Gastrocnemius medialis (tissue), 4 donors: ENCODE measurements at regions of chr11 and their contacts with region 1.

Region 1: DNA sequence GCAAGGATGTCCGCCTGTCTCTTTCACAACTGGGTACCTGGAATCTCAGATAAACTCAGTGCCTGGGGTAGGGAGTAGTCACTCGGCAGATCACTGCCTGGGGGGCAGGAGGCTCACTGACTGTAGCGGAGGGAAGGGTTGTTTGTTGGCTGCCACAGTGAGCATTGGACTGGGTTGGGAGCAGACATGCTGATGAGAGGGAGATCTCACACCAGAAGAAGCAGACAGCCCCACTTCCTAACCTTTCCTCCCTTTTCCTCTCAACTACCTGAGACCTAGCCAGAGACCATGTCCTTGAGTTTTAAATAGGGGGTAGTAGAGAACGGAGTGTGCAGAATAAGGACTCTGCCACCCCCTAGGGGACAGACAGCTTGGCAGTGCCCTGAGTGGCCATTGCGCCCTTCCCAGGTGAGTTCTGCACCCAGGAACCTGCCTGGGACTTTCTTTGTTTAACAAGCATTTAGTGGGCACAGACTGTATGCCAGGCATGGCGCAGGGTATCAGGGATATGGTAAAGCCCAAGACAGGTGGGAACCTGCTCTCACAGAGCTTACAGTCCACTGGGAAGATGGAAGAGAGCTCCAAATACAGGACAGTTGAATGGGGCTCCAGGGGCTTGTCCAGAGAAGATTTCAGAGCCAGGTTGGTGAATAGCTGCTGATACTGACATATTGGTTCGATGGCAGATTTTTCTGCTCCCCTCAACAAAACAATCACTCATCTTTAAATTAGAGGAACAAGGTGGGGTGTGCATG is 115.7 kb upstream of the NNMT start:
- DNase-seq: peak in 1 of 2 donors; percentile 81
- ATAC-seq: peak; percentile 2 to 18
- H3K4me3 ChIP-seq: peak overlapping the region; percentile 49 to 64 (median 57)
- H3K27ac ChIP-seq: peak overlapping the region; percentile 94 to 99 (median 96)
- H3K4me1 ChIP-seq: peaks cover 86 to 90% of the 10 kb centered on the region in 2 donors
- H3K27me3 ChIP-seq: no peaks in the 10 kb centered on the region
- CTCF ChIP-seq: peak in 4 of 5 experiments; percentile 48 to 70 (median 63)
- POLR2A ChIP-seq: no peak

Region 2: GRCh38 chr11:114066046-114066648 is 114.3 kb before region 1 on chr11:
- in situ Hi-C with region 1: loop called (anchors 5 to 10 kb)
- intact Hi-C with region 1: loop called (anchors 5 kb)
- DNase-seq: no peak
- ATAC-seq: no peak
- H3K4me3 ChIP-seq: peak overlapping the region; percentile 68 to 100 (median 82)
- H3K27ac ChIP-seq: peak overlapping the region; percentile 94 to 99 (median 96)
- H3K4me1 ChIP-seq: peaks cover 72 to 87% of the 10 kb centered on the region in 2 donors
- H3K27me3 ChIP-seq: no peaks in the 10 kb centered on the region
- CTCF ChIP-seq: no peak
- POLR2A ChIP-seq: no peak

Region 3: GRCh38 chr11:114121804-114122504 is 58.5 kb before region 1 on chr11:
- in situ Hi-C with region 1: no loop called
- intact Hi-C with region 1: loop called (anchors 2 kb)
- DNase-seq: peak in 1 of 2 donors; percentile 14
- ATAC-seq: no peak
- H3K4me3 ChIP-seq: peak overlapping the region in 1 of 4 donors; percentile 12
- H3K27ac ChIP-seq: peak overlapping the region; percentile 94 to 99 (median 96)
- H3K4me1 ChIP-seq: peaks cover 96% of the 10 kb centered on the region in 2 donors
- H3K27me3 ChIP-seq: no peaks in the 10 kb centered on the region
- CTCF ChIP-seq: no peak
- POLR2A ChIP-seq: no peak

Region 4: GRCh38 chr11:114197799-114198500 is 17.5 kb after region 1 on chr11:
- in situ Hi-C with region 1: no loop called
- intact Hi-C with region 1: loop called (anchors 2 kb)
- DNase-seq: peak; percentile 91 to 96
- ATAC-seq: peak; percentile 65 to 68
- H3K4me3 ChIP-seq: peak overlapping the region in 2 of 4 donors; percentile 11 to 23
- H3K27ac ChIP-seq: peak overlapping the region; percentile 90 to 99 (median 96)
- H3K4me1 ChIP-seq: peaks cover 95 to 98% of the 10 kb centered on the region in 2 donors
- H3K27me3 ChIP-seq: no peaks in the 10 kb centered on the region
- CTCF ChIP-seq: no peak
- POLR2A ChIP-seq: peak; percentile 80 to 96